ENCODE measurements at regions of chr20 and their contacts with region 1.

Region 1: DNA sequence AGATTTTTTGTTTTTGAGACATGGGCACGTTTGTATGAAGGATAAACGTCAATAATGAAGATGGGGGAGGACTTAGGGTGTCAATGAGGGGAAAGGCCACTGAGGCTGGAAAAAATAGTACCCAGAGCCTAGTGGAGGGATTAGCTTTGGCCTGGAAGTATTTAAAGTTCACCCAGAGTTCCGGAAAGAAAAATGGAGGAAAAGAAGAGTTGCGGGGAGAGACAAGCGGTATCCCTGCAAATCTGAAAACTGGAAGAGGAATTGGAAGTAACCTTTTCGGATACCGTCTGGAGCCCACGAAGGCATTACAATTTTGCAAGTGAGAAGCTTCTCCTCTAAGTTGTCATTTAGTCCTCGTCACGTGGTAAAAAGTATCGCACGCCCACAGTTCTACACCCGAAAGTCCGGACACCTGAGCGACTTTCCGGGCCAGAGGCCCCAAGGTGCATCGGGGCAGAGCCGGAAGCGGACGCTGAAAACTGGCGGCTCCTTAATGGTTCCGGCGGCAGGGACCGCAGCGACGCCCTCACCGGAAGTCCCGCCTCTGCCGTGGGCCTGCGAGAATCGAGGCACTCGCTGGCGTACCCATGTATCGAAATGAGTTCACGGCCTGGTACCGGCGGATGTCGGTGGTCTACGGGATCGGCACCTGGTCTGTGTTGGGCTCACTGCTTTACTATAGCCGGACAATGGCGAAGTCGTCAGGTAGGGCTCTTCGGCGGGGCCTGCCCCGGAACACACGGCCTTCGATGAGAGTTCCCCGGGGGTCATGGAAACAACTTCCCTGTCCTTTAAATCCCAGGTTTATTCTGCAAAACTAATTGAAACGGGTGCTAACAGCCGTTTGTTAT is at the start of gene SMIM26:
- DNase-seq: peak; percentile 96
- H3K4me3 Mint-ChIP-seq: peak within 1 kb of the TSS; percentile 90
- H3K27ac Mint-ChIP-seq: peak within 1 kb of the TSS; percentile 91
- H3K4me1 Mint-ChIP-seq: peaks cover 11% of the 10 kb centered on the region
- H3K27me3 Mint-ChIP-seq: no peaks in the 10 kb centered on the region
- total RNA-seq, gene SMIM26: 56.0 to 59.0 TPM

Region 2: GRCh38 chr20:18466894-18467730 is 100.0 kb before region 1 on chr20 and contains the starts of genes DZANK1 and POLR3F:
- CTCF ChIA-PET with region 1: no interaction called
- POLR2A ChIA-PET with region 1: interaction called, 3 read pairs
- intact Hi-C with region 1: loop called (anchors 1 kb)
- DNase-seq: peak; percentile 96
- H3K4me3 Mint-ChIP-seq: peak within 1 kb of the TSS; percentile 95
- H3K27ac Mint-ChIP-seq: peak within 1 kb of the TSS; percentile 87
- H3K4me1 Mint-ChIP-seq: peaks cover 23% of the 10 kb centered on the region
- H3K27me3 Mint-ChIP-seq: no peaks in the 10 kb centered on the region
- total RNA-seq, gene DZANK1: 1.4 to 1.6 TPM
- total RNA-seq, gene POLR3F: 11.0 to 11.3 TPM

Region 3: DNA sequence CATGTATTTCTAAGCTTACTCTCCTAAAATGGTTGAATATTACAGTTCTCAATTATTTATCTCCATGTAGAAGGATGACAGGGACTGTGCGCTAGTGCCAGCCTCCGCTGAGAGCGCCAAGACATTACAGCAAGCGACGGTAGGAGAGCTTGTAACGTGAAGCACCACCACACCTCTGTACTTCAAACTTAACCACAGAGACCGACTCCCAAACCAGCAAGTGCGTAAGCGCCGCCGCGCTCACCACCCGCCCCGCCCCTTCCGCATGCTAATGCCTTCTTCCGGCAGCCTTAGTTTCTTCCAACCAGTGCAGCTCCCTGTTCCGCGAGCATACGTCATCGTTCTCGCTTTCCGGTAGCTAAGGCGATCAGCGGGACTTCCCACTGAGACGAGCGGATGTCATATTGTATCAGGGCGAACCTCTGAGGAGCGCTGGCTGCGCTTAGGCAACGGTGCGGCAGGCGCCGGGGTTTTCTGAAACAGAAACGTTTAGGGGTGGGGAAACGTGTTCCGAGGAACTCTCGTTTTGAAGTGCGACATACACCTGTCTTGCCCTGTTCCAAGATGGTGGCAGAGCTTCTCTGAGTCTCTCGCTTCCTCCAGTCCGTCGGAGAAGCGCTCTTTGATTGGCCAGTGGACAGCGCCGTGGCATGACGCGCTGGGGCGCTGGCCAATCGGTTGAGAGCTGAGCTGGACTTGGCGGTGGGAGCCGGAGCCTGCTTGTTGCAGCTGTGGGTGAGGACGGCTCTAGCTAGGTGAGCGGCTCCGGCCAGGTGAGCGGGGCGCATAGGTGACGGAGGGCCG is 59.7 kb before region 1 on chr20 and contains the start of gene SEC23B:
- CTCF ChIA-PET with region 1: interaction called, 3 read pairs
- POLR2A ChIA-PET with region 1: interaction called, 14 read pairs
- intact Hi-C with region 1: loop called (anchors 1 kb)
- DNase-seq: peak; percentile 99
- H3K4me3 Mint-ChIP-seq: peak within 1 kb of the TSS; percentile 96
- H3K27ac Mint-ChIP-seq: peak within 1 kb of the TSS; percentile 97
- H3K4me1 Mint-ChIP-seq: peaks cover 40% of the 10 kb centered on the region
- H3K27me3 Mint-ChIP-seq: no peaks in the 10 kb centered on the region
- total RNA-seq, gene SEC23B: 90.6 to 97.1 TPM

Region 4: GRCh38 chr20:18613556-18613955 is 46.4 kb after region 1 on chr20:
- CTCF ChIA-PET with region 1: no interaction called
- POLR2A ChIA-PET with region 1: no interaction called
- intact Hi-C with region 1: loop called (anchors 1 kb)
- DNase-seq: peak; percentile 37
- H3K4me3 Mint-ChIP-seq: no peak overlapping the region
- H3K27ac Mint-ChIP-seq: no peak overlapping the region
- H3K4me1 Mint-ChIP-seq: peaks cover 11% of the 10 kb centered on the region
- H3K27me3 Mint-ChIP-seq: no peaks in the 10 kb centered on the region

Region 5: GRCh38 chr20:18778690-18779392 is 211.7 kb after region 1 on chr20:
- CTCF ChIA-PET with region 1: no interaction called
- POLR2A ChIA-PET with region 1: no interaction called
- intact Hi-C with region 1: no loop called
- DNase-seq: no peak
- H3K4me3 Mint-ChIP-seq: no peak overlapping the region
- H3K27ac Mint-ChIP-seq: no peak overlapping the region
- H3K4me1 Mint-ChIP-seq: no peaks in the 10 kb centered on the region
- H3K27me3 Mint-ChIP-seq: no peaks in the 10 kb centered on the region

Measured in activated CD4-positive, alpha-beta memory T cell treated with anti-CD3 and anti-CD28 coated beads for 36 hours (primary cell).